ENCODE measurements at regions of chr17 and their contacts with region 1.

Region 1: DNA sequence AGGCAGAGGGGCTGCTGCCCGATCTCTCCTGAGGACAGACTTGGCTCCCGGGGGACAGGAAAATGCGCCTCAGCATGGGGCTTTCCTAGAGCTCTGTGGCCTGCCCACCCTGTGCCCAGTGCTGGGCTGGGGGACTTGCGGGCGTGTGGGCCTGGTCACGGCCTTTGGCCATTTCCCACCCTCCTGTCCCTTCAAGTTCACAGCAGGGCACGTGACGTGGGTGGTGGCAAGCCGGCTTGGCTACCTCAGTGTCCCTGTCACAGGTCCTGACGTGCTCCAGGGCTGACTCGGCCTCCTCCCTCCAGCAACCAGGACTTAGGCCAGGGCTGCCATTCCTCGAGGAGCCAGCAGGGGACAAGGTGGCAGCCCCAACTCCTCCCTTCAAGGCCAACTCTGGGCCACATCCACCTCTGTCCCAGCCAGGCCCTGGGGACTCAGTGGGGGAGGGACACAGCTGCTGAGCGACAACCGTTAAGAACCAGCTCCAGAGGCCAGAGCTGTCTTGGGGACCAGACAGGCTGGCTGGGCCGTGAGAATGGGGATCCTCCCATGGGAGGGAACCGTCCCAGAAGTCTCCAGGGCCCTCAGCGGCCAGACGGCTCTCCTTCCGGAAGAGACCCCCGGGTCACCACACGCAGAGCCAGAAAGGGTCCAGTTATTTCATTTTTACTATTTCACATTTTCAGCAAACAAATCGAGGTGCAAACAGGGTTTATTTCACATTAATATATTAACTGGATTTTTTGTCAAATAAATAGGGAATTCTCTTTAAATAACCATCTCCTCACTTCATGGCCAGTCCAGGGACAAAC is 1.1 kb upstream of the UNC13D start:
- DNase-seq: peak; percentile 47
- ATAC-seq: peak; percentile 89
- H3K4me3 ChIP-seq: no peak overlapping the region
- H3K27ac ChIP-seq: peak overlapping the region; percentile 84
- H3K4me1 ChIP-seq: peaks cover 41% of the 10 kb centered on the region
- H3K27me3 ChIP-seq: no peaks in the 10 kb centered on the region
- CTCF ChIP-seq: peak; percentile 87

Region 2: GRCh38 chr17:75515496-75516254 is 329.6 kb before region 1 on chr17 and contains the start of gene CASKIN2:
- CTCF ChIA-PET with region 1: no interaction called
- POLR2A ChIA-PET with region 1: no interaction called
- in situ Hi-C with region 1: no loop called
- intact Hi-C with region 1: no loop called
- DNase-seq: peak; percentile 41
- ATAC-seq: peak; percentile 84
- H3K4me3 ChIP-seq: peak within 1 kb of the TSS; percentile 72 to 82
- H3K27ac ChIP-seq: peak within 1 kb of the TSS; percentile 80
- H3K4me1 ChIP-seq: peaks cover 38% of the 10 kb centered on the region
- H3K27me3 ChIP-seq: no peaks in the 10 kb centered on the region
- CTCF ChIP-seq: peak; percentile 100
- total RNA-seq, gene CASKIN2: 40.0 TPM

Region 3: GRCh38 chr17:75855310-75856081 is 10.2 kb after region 1 on chr17 and contains the start of gene WBP2:
- CTCF ChIA-PET with region 1: interaction called, 22 read pairs
- POLR2A ChIA-PET with region 1: interaction called, 6 read pairs
- in situ Hi-C with region 1: no loop called
- intact Hi-C with region 1: no loop called
- DNase-seq: peak; percentile 99
- ATAC-seq: peak; percentile 96
- H3K4me3 ChIP-seq: peak within 1 kb of the TSS; percentile 91 to 97
- H3K27ac ChIP-seq: peak within 1 kb of the TSS; percentile 88
- H3K4me1 ChIP-seq: peaks cover 19% of the 10 kb centered on the region
- H3K27me3 ChIP-seq: no peaks in the 10 kb centered on the region
- CTCF ChIP-seq: peak; percentile 81
- total RNA-seq, gene WBP2: 163 TPM

Region 4: GRCh38 chr17:75914643-75915267 is 69.5 kb after region 1 on chr17:
- CTCF ChIA-PET with region 1: interaction called, 10 read pairs
- POLR2A ChIA-PET with region 1: no interaction called
- in situ Hi-C with region 1: no loop called
- intact Hi-C with region 1: no loop called
- DNase-seq: no peak
- ATAC-seq: no peak
- H3K4me3 ChIP-seq: no peak overlapping the region
- H3K27ac ChIP-seq: no peak overlapping the region
- H3K4me1 ChIP-seq: no peaks in the 10 kb centered on the region
- H3K27me3 ChIP-seq: no peaks in the 10 kb centered on the region
- CTCF ChIP-seq: no peak